Activated B cell treated with CpG ODN at 0.5 μM for 24 hours (primary cell): ENCODE measurements at regions of chr12 and their contacts with region 1.

Region 1: DNA sequence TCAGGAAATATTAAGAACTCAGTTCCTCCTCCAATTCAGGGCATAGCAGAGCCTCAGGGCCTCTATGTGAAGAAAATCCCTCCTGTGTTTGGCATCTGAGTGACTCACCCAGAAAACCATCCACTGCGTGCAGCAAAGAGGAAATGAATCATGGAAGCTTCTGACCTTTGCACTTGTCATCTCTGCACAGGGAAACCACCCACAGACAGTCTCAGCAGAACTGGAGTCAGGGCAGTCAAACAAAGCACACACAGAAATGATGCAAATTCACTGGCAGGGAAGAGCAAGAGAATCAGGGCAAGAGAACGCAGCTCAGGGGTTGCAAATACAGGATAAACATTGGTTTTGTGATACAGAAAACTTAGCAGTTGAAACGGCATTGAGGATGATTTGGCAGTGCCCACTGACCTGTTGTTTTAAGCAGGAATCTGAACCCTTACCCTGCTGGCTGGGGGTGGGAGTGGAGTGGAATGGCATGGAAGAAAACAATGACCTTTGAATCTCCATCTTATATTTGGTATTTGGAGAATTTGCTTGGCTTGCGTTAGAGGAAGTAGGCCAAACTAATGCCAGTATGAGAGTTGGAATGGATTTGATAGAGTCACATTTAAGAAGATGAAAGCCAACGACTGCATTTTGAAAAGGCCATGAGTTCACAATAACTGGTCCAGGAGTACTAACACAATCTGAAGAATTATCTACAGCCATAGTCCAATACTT is 53.5 kb downstream of the PHLDA1 start:
- DNase-seq: peak; percentile 23
- ATAC-seq: peak; percentile 93
- H3K4me3 Mint-ChIP-seq: peak overlapping the region; percentile 11
- H3K27ac Mint-ChIP-seq: peak overlapping the region; percentile 65
- H3K4me1 Mint-ChIP-seq: peaks cover 35% of the 10 kb centered on the region
- H3K27me3 Mint-ChIP-seq: no peaks in the 10 kb centered on the region
- CTCF ChIP-seq: no peak

Region 2: GRCh38 chr12:75623631-75624118 is 354.4 kb before region 1 on chr12:
- CTCF ChIA-PET with region 1: no interaction called
- POLR2A ChIA-PET with region 1: no interaction called
- intact Hi-C with region 1: no loop called
- DNase-seq: no peak
- ATAC-seq: no peak
- H3K4me3 Mint-ChIP-seq: no peak overlapping the region
- H3K27ac Mint-ChIP-seq: no peak overlapping the region
- H3K4me1 Mint-ChIP-seq: no peaks in the 10 kb centered on the region
- H3K27me3 Mint-ChIP-seq: no peaks in the 10 kb centered on the region
- CTCF ChIP-seq: no peak

Region 3: DNA sequence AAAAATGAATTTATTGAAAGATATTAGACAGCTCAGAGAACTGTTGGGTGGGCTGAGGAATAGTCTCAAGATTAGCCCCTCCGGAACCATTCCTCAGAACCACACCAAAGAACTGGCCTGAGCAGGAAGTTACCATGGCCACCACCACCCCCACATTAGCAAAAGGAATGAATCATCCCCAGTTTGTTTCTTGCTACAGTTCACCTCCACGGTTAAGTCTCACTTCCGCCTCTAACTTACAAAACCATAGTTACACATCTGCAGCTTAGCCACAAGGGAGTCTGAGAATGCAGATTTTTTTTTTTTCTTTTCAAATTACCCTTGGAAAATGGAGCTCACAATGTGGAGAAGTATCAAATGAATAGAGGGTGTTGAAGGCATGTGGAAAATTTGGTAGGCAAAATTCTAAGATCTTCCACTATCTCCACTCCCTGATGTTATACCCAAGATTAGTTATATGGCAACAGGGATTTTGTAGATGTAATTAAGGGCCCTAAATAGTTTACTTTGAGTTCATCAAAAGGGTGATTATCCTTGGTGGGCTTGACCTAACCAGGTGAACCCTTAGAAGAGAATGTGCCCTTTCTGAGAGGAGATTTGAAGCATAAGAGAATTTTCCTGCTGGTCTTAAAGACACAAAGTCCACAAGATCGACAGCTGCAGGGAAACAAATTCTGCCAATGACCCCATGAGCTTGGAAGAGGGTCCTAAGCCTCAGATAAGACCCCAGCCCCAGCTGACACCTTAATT is 336.9 kb before region 1 on chr12:
- CTCF ChIA-PET with region 1: no interaction called
- POLR2A ChIA-PET with region 1: no interaction called
- intact Hi-C with region 1: loop called (anchors 5 kb)
- DNase-seq: no peak
- ATAC-seq: peak; percentile 96
- H3K4me3 Mint-ChIP-seq: peak overlapping the region; percentile 26
- H3K27ac Mint-ChIP-seq: peak overlapping the region; percentile 51
- H3K4me1 Mint-ChIP-seq: peaks cover 33% of the 10 kb centered on the region
- H3K27me3 Mint-ChIP-seq: peaks cover under 1% of the 10 kb centered on the region
- CTCF ChIP-seq: no peak

Region 4: DNA sequence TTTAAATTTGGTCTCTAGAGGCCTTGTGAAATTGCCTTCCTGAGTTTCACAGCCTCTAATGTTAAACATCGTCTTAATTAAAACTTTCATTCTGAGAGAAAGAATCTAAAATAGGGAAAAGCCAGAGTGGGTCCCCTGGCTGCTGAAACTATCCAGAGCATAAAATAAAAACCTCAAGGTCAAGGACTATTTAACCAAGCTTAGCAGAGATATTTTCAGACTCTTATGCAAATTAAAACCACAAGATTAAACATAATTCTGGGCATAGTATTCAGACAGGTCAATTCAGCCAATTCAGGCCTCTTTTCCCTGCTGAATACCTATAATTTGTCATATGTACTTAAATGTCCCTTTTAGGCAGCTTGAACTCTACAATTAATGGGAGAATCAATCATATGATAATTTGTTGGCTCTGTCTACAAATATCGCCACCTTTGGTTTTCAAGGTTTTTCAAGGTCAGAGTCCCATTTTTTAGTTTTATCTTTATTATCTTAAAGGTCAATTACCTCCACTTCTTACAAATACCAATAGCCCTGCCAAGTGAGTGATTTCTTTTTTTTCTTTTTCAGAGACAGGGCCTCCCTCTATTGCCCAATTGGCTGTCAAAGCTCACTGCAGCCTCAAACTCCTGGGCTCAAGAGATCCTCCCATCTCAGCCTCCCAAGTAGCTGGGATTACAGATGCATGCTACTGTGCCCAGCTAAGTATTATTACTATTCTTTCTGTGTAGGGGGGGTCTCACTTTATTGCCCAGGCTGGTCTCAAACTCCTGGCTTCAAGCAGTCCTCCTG is 203.7 kb before region 1 on chr12:
- CTCF ChIA-PET with region 1: no interaction called
- POLR2A ChIA-PET with region 1: no interaction called
- intact Hi-C with region 1: loop called (anchors 5 kb)
- DNase-seq: no peak
- ATAC-seq: peak; percentile 69
- H3K4me3 Mint-ChIP-seq: peak overlapping the region; percentile 28
- H3K27ac Mint-ChIP-seq: no peak overlapping the region
- H3K4me1 Mint-ChIP-seq: peaks cover 20% of the 10 kb centered on the region
- H3K27me3 Mint-ChIP-seq: no peaks in the 10 kb centered on the region
- CTCF ChIP-seq: no peak

Region 5: DNA sequence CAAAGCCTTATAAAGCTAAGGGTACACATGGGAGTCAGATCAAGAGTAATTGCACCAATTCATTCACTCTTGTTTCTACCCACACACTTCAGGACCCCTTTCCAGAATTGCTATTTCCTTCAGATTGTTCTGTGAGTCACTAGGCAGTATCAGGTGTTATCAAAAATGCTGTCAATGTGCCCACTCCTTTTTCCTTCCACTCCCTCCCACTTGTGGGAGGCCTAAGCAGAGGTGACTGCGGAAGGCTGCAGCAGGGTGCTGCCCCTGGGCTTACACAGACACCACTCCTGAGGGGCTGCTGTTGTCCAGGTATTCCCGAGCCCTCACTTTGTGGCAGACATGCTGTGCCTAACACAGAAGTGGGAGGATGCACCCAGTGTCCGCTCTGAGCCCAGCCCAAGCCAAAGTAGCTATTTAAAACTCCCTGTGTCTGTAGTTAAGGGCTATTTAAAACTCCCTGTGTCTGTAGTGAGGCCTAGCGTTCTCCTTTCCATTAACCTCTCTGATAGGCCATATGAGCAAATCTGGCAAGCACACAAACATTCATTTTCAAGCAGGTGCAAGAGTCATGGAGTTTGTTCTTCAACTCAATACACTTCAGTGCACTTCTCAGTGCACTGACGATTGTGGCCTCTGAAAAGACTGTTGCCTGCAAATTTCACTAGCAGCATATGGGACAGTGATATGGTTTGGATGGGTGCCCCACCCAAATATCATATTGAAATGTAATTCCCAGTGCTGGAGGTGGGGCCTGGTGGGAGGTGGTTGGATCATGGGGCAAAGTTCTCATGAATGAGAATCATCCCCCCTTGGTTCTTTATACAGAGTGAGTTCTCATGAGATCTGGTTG is 64.4 kb before region 1 on chr12:
- CTCF ChIA-PET with region 1: no interaction called
- POLR2A ChIA-PET with region 1: no interaction called
- intact Hi-C with region 1: loop called (anchors 1 kb)
- DNase-seq: no peak
- ATAC-seq: no peak
- H3K4me3 Mint-ChIP-seq: no peak overlapping the region
- H3K27ac Mint-ChIP-seq: no peak overlapping the region
- H3K4me1 Mint-ChIP-seq: peaks cover 19% of the 10 kb centered on the region
- H3K27me3 Mint-ChIP-seq: peaks cover 7% of the 10 kb centered on the region
- CTCF ChIP-seq: no peak

Region 6: DNA sequence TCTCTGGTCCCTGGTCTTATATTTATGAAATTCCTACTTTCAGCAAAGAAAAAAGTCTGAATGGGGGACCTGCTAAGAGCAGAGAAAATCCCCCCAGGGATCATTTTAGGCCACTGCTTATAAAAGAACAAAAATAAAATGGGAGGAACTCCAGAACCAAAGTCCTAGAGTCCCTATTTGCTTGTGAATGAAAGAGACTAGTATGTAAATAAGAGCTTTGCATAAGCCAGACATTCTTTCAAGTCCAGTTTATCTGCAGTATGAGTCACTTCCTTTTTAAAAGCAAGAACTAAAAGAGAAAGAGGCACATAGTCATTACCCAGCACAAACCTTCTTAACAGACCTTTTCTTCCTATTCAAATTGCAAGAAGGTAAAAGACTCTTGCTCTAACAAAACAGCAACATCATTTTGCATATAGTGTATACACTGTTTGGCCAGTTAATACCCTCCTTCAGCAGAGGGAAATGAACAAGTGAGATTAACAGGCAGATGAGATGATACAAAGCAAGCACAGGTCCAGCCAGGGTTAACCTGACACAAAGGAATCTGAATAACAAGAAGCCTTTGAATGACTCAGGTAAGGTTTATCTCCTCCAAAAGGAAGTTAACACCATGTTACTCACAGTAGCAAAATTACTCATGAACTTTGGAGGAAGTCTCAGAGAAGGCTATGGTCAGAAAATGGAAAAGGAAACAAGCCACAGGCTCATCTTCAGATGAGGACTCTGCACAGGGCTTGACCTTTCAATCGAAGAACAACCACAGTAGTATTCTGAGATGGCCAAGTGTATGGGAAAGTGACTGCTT is 33.8 kb before region 1 on chr12:
- CTCF ChIA-PET with region 1: no interaction called
- POLR2A ChIA-PET with region 1: interaction called, 3 read pairs
- intact Hi-C with region 1: loop called (anchors 1 kb)
- DNase-seq: no peak
- ATAC-seq: peak; percentile 88
- H3K4me3 Mint-ChIP-seq: peak overlapping the region; percentile 56
- H3K27ac Mint-ChIP-seq: peak overlapping the region; percentile 83
- H3K4me1 Mint-ChIP-seq: peaks cover 18% of the 10 kb centered on the region
- H3K27me3 Mint-ChIP-seq: no peaks in the 10 kb centered on the region
- CTCF ChIP-seq: no peak

Region 7: DNA sequence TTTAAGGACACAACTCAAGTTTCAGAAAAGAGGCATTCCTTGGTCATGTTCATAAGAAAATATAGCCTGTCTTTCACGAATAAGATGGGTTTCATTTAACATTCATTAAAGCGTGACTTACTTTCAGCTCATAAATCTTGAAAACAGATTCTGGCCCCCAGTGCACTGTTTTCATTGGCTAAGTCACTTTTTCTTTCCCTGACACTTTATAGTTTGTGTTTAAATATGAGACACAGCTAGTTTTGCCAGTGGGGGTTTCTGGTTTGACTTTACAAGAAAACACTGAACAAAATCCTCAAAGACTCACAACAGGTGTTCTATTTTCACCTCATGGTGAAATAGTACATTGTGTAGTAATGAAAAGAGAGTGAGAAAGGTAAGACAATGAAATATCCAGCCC is 12.5 kb before region 1 on chr12:
- CTCF ChIA-PET with region 1: no interaction called
- POLR2A ChIA-PET with region 1: interaction called, 10 read pairs
- intact Hi-C with region 1: no loop called
- DNase-seq: no peak
- ATAC-seq: no peak
- H3K4me3 Mint-ChIP-seq: no peak overlapping the region
- H3K27ac Mint-ChIP-seq: no peak overlapping the region
- H3K4me1 Mint-ChIP-seq: peaks cover 8% of the 10 kb centered on the region
- H3K27me3 Mint-ChIP-seq: peaks cover 7% of the 10 kb centered on the region
- CTCF ChIP-seq: no peak

Region 8: GRCh38 chr12:76020731-76021672 is 42.9 kb after region 1 on chr12:
- CTCF ChIA-PET with region 1: no interaction called
- POLR2A ChIA-PET with region 1: no interaction called
- intact Hi-C with region 1: loop called (anchors 2 kb)
- DNase-seq: no peak
- ATAC-seq: peak; percentile 62
- H3K4me3 Mint-ChIP-seq: no peak overlapping the region
- H3K27ac Mint-ChIP-seq: no peak overlapping the region
- H3K4me1 Mint-ChIP-seq: peaks cover 19% of the 10 kb centered on the region
- H3K27me3 Mint-ChIP-seq: peaks cover 24% of the 10 kb centered on the region
- CTCF ChIP-seq: no peak